Heart left ventricle (tissue), 16 donors: ENCODE measurements at regions of chr2 and their contacts with region 1.

Region 1: GRCh38 chr2:136665736-136666135 is 99.6 kb upstream of the THSD7B start:
- DNase-seq: no peak
- ATAC-seq: no peak
- H3K4me3 ChIP-seq: no peak overlapping the region
- H3K27ac ChIP-seq: no peak overlapping the region
- H3K4me1 ChIP-seq: no peaks in the 10 kb centered on the region
- H3K27me3 ChIP-seq: peaks cover 0 to 2% (median 0%) of the 10 kb centered on the region in 9 donors
- CTCF ChIP-seq: no peak
- POLR2A ChIP-seq: no peak

Region 2: DNA sequence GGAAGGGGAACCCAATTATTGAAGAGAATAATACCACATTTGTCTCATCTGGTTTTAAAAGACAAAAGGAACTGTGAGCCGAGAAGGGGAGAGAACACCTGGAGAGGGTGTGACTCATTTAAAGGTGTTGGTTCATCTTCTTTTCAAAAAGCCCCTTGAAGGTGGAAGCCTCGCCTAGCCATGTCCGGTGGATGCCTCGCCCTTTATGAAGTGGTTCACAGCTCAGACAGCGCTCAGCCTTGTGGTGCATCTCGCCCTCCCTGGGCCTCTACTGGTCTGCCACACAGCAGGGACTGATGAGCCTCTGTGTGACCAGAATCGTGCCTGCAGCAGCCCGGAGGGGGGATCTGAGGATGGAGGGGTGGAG is 257.8 kb before region 1 on chr2:
- intact Hi-C with region 1: no loop called
- DNase-seq: no peak
- ATAC-seq: no peak
- H3K4me3 ChIP-seq: no peak overlapping the region
- H3K27ac ChIP-seq: no peak overlapping the region
- H3K4me1 ChIP-seq: no peaks in the 10 kb centered on the region
- H3K27me3 ChIP-seq: peaks cover 0 to 34% (median 6%) of the 10 kb centered on the region in 9 donors
- CTCF ChIP-seq: no peak
- POLR2A ChIP-seq: no peak

Region 3: GRCh38 chr2:136645236-136645828 is 20.4 kb before region 1 on chr2:
- intact Hi-C with region 1: loop called in 1 of 10 experiments (anchors 2 kb)
- DNase-seq: no peak
- ATAC-seq: peak in 3 of 4 donors; percentile 39 to 61 (median 54)
- H3K4me3 ChIP-seq: no peak overlapping the region
- H3K27ac ChIP-seq: no peak overlapping the region
- H3K4me1 ChIP-seq: peaks cover 0 to 12% (median 3%) of the 10 kb centered on the region in 12 donors
- H3K27me3 ChIP-seq: no peaks in the 10 kb centered on the region
- CTCF ChIP-seq: no peak
- POLR2A ChIP-seq: no peak

Region 4: DNA sequence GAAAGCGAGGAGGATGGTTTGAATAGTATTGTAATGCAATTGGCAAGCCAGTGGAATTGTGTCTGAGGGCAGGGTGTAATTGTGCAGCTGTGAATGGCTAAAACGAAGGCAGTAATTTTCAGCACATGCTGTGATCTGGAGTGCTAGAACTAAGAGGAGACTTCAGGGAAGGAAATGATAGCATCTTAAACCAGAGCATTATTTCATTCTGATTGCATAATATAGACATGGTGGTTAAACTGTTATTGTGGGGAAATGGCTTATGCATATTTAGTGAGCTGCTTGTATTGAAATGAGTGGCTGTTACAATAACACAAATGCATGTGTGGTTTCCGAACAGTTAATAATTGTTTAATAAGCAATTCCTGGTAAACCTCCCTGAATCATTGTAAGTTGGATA is 136.0 kb after region 1 on chr2:
- intact Hi-C with region 1: no loop called
- DNase-seq: no peak
- ATAC-seq: no peak
- H3K4me3 ChIP-seq: no peak overlapping the region
- H3K27ac ChIP-seq: no peak overlapping the region
- H3K4me1 ChIP-seq: no peaks in the 10 kb centered on the region
- H3K27me3 ChIP-seq: no peaks in the 10 kb centered on the region
- CTCF ChIP-seq: no peak
- POLR2A ChIP-seq: no peak

Region 5: DNA sequence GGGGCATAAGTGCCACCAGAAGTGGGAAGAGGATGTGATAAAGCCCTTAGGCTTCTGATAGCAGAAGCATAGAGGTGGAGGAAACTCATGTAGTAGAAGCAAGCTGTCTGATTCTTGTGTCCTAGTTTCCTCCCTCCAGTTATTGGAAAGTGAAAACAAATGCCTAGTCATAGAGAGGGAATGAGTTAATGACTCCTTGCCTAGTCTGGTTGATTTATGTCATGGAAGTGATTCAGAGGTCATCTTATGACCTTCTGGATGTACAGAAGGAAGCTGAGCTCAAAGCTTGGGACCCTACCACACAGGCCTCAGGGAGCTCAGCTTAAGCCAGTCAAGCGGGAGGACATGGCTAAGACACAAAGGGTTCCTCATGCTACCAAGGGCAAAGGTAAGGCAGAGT is 331.8 kb after region 1 on chr2:
- intact Hi-C with region 1: no loop called
- DNase-seq: no peak
- ATAC-seq: no peak
- H3K4me3 ChIP-seq: no peak overlapping the region
- H3K27ac ChIP-seq: no peak overlapping the region
- H3K4me1 ChIP-seq: no peaks in the 10 kb centered on the region
- H3K27me3 ChIP-seq: no peaks in the 10 kb centered on the region
- CTCF ChIP-seq: no peak
- POLR2A ChIP-seq: no peak